ENCODE measurements at regions of chr1 and their contacts with region 1.

Region 1: DNA sequence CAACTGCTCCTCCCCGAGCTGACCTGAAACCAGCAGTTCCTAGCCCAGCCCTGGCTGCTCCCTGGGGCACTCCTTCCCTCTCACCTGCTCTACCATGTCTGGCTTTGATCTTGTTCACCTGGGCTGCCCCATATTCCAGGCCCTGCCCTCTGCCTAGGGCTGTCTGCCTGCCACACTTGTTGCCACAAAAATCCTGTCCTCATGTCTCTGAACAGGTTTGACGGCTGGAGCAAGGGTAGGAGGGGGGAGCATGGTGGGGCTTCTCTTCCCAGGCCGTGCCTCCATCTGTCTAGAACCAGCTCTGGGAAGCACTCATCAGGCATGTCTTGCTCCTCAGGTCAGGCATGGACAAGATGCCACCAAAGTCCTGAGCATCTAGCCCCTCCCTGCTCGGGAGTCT is 44.3 kb upstream of the WNT2B start:
- DNase-seq: peak; percentile 69
- ATAC-seq: peak; percentile 36
- H3K4me3 ChIP-seq: no peak overlapping the region
- H3K27ac ChIP-seq: peak overlapping the region; percentile 25
- H3K4me1 ChIP-seq: peaks cover 23% of the 10 kb centered on the region
- H3K27me3 ChIP-seq: no peaks in the 10 kb centered on the region
- CTCF ChIP-seq: no peak

Region 2: GRCh38 chr1:112390775-112391602 is 73.5 kb before region 1 on chr1:
- intact Hi-C with region 1: loop called (anchors 5 kb)
- DNase-seq: peak; percentile 86
- ATAC-seq: peak; percentile 94
- H3K4me3 ChIP-seq: peak overlapping the region; percentile 48
- H3K27ac ChIP-seq: peak overlapping the region; percentile 77
- H3K4me1 ChIP-seq: peaks cover 22% of the 10 kb centered on the region
- H3K27me3 ChIP-seq: no peaks in the 10 kb centered on the region
- CTCF ChIP-seq: peak; percentile 91

Region 3: GRCh38 chr1:112522621-112523020 is 58.1 kb after region 1 on chr1:
- intact Hi-C with region 1: no loop called
- DNase-seq: no peak
- ATAC-seq: no peak
- H3K4me3 ChIP-seq: no peak overlapping the region
- H3K27ac ChIP-seq: no peak overlapping the region
- H3K4me1 ChIP-seq: no peaks in the 10 kb centered on the region
- H3K27me3 ChIP-seq: no peaks in the 10 kb centered on the region
- CTCF ChIP-seq: no peak

Measured in upper lobe of right lung (tissue), 1 donor.